ENCODE measurements at regions of chr9 and their contacts with region 1.

Region 1: DNA sequence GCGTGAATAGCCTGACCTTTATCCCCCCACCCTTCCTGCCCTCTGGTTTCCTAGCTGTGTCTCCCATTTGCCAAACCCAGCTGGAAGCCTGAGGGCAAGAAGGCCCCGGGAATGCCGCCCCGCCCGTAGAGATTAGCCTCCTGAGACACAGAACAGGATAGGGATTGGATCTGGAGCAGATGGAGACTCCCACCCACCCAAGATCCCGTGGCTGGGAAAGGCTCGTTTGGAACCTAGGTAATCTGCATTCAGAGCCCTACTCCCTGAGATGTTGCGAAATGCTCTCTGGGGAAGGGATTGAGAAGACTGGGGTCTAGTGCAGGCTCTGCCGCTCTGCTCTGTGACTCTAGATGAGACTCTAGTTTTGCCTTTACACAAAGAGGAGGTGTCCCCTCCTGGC is 11.0 kb downstream of the AQP3 start:
- DNase-seq: no peak
- H3K4me3 Mint-ChIP-seq: no peak overlapping the region
- H3K27ac Mint-ChIP-seq: no peak overlapping the region
- H3K4me1 Mint-ChIP-seq: peaks cover 30% of the 10 kb centered on the region
- H3K27me3 Mint-ChIP-seq: no peaks in the 10 kb centered on the region
- CTCF ChIP-seq: no peak

Region 2: GRCh38 chr9:33452828-33453271 is 16.4 kb after region 1 on chr9:
- CTCF ChIA-PET with region 1: interaction called, 23 read pairs
- POLR2A ChIA-PET with region 1: no interaction called
- intact Hi-C with region 1: no loop called
- DNase-seq: peak; percentile 96
- H3K4me3 Mint-ChIP-seq: no peak overlapping the region
- H3K27ac Mint-ChIP-seq: no peak overlapping the region
- H3K4me1 Mint-ChIP-seq: peaks cover 13% of the 10 kb centered on the region
- H3K27me3 Mint-ChIP-seq: no peaks in the 10 kb centered on the region
- CTCF ChIP-seq: peak; percentile 66